Activated CD8-positive, alpha-beta T cell treated with anti-CD3 and anti-CD28 coated beads, Interleukin-2, amount 10 ng/mL, durations not matched to agents 7 days and 5 days (primary cell): ENCODE measurements at regions of chr9 and their contacts with region 1.

Region 1: GRCh38 chr9:136686794-136687711 is at the start of gene AGPAT2:
- DNase-seq: peak; percentile 83
- ATAC-seq: peak; percentile 87
- H3K4me3 Mint-ChIP-seq: peak within 1 kb of the TSS; percentile 82
- H3K27ac Mint-ChIP-seq: peak within 1 kb of the TSS; percentile 80
- H3K4me1 Mint-ChIP-seq: peaks cover 13% of the 10 kb centered on the region
- H3K27me3 Mint-ChIP-seq: peaks cover 6% of the 10 kb centered on the region
- total RNA-seq, gene AGPAT2: 32.7 to 33.7 TPM

Region 2: GRCh38 chr9:136671646-136672430 is 15.2 kb before region 1 on chr9:
- CTCF ChIA-PET with region 1: interaction called, 19 read pairs
- POLR2A ChIA-PET with region 1: interaction called, 5 read pairs
- DNase-seq: peak; percentile 54
- ATAC-seq: peak; percentile 61
- H3K4me3 Mint-ChIP-seq: no peak overlapping the region
- H3K27ac Mint-ChIP-seq: no peak overlapping the region
- H3K4me1 Mint-ChIP-seq: peaks cover 3% of the 10 kb centered on the region
- H3K27me3 Mint-ChIP-seq: peaks cover 1% of the 10 kb centered on the region